ENCODE measurements at regions of chr4 and their contacts with region 1.

Region 1: GRCh38 chr4:55409468-55410171 is 13.9 kb downstream of the TMEM165 start:
- DNase-seq: peak in 1 of 2 experiments; percentile 34
- H3K4me3 ChIP-seq: no peak overlapping the region
- H3K4me3 Mint-ChIP-seq: no peak overlapping the region
- H3K27ac Mint-ChIP-seq: no peak overlapping the region
- H3K4me1 ChIP-seq: peaks cover 23% of the 10 kb centered on the region
- H3K4me1 Mint-ChIP-seq: peaks cover 32% of the 10 kb centered on the region
- H3K27me3 ChIP-seq: no peaks in the 10 kb centered on the region
- H3K27me3 Mint-ChIP-seq: no peaks in the 10 kb centered on the region
- CTCF ChIP-seq: peak in 1 of 2 experiments; percentile 42

Region 2: GRCh38 chr4:55303818-55304217 is 105.8 kb before region 1 on chr4:
- CTCF ChIA-PET with region 1: no interaction called
- POLR2A ChIA-PET with region 1: no interaction called
- intact Hi-C with region 1: no loop called
- DNase-seq: no peak
- H3K4me3 ChIP-seq: no peak overlapping the region
- H3K4me3 Mint-ChIP-seq: no peak overlapping the region
- H3K27ac Mint-ChIP-seq: no peak overlapping the region
- H3K4me1 ChIP-seq: no peaks in the 10 kb centered on the region
- H3K4me1 Mint-ChIP-seq: no peaks in the 10 kb centered on the region
- H3K27me3 ChIP-seq: no peaks in the 10 kb centered on the region
- H3K27me3 Mint-ChIP-seq: peaks cover 3% of the 10 kb centered on the region
- CTCF ChIP-seq: no peak

Region 3: GRCh38 chr4:55345980-55346850 is 63.4 kb before region 1 on chr4 and contains the start of gene SRD5A3:
- CTCF ChIA-PET with region 1: no interaction called
- POLR2A ChIA-PET with region 1: no interaction called
- intact Hi-C with region 1: loop called (anchors 2 kb)
- DNase-seq: peak; percentile 82 to 95
- H3K4me3 ChIP-seq: peak within 1 kb of the TSS; percentile 55
- H3K4me3 Mint-ChIP-seq: peak within 1 kb of the TSS; percentile 84
- H3K27ac Mint-ChIP-seq: peak within 1 kb of the TSS; percentile 93
- H3K4me1 ChIP-seq: peaks cover 9% of the 10 kb centered on the region; the same call in 1 of the 2 replicates
- H3K4me1 Mint-ChIP-seq: peaks cover 22% of the 10 kb centered on the region
- H3K27me3 ChIP-seq: no peaks in the 10 kb centered on the region
- H3K27me3 Mint-ChIP-seq: no peaks in the 10 kb centered on the region
- CTCF ChIP-seq: peak; percentile 71 to 84
- total RNA-seq, gene SRD5A3: 22.6 and 26.9 TPM in 2 replicates

Region 4: GRCh38 chr4:55395529-55396307 is 13.9 kb before region 1 on chr4 and contains the start of gene TMEM165:
- CTCF ChIA-PET with region 1: no interaction called
- POLR2A ChIA-PET with region 1: no interaction called
- intact Hi-C with region 1: loop called (anchors 1 kb)
- DNase-seq: peak; percentile 91 to 95
- H3K4me3 ChIP-seq: peak within 1 kb of the TSS; percentile 89
- H3K4me3 Mint-ChIP-seq: peak within 1 kb of the TSS; percentile 91
- H3K27ac Mint-ChIP-seq: peak within 1 kb of the TSS; percentile 94
- H3K4me1 ChIP-seq: peaks cover 8% of the 10 kb centered on the region; the same call in 1 of the 2 replicates
- H3K4me1 Mint-ChIP-seq: peaks cover 24% of the 10 kb centered on the region
- H3K27me3 ChIP-seq: no peaks in the 10 kb centered on the region
- H3K27me3 Mint-ChIP-seq: no peaks in the 10 kb centered on the region
- CTCF ChIP-seq: no peak
- total RNA-seq, gene TMEM165: 90.4 and 91.9 TPM in 2 replicates

Region 5: DNA sequence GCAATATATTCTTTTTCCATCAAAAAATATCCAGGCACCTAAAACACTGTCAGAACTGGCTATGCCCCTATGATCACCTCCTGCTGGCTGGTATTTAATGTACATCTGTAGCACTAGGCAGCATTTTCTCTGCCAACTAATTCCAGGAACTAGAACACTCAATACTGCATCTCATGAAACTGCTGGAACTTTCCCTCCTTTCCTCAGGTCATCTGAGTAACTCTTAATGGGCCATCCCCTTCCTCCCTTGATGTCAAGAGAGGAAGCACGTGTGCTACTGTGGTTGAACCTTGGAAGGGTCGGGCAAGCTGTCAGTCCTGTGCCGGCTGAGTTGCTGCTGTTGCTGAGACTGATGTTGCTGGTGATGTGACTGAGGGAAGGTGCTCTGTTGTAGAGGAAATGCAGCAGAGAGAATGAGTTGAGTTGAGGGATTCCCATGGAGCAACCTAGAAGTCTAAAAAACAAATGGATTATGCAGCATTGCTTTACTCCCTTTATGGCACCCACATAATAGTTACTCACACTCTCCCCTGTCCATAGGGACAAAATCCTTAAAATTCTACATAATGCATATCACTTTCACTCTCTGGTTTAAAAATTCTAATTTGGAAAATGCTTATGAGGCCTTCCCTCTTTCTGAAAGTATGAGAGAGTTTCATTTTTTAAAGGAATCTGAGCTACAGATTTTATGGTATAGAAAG is 25.7 kb after region 1 on chr4:
- CTCF ChIA-PET with region 1: interaction called, 3 read pairs
- POLR2A ChIA-PET with region 1: no interaction called
- intact Hi-C with region 1: loop called (anchors 2 kb)
- DNase-seq: no peak
- H3K4me3 ChIP-seq: no peak overlapping the region
- H3K4me3 Mint-ChIP-seq: no peak overlapping the region
- H3K27ac Mint-ChIP-seq: no peak overlapping the region
- H3K4me1 ChIP-seq: peaks cover 48% of the 10 kb centered on the region
- H3K4me1 Mint-ChIP-seq: peaks cover 22% of the 10 kb centered on the region
- H3K27me3 ChIP-seq: no peaks in the 10 kb centered on the region
- H3K27me3 Mint-ChIP-seq: no peaks in the 10 kb centered on the region
- CTCF ChIP-seq: no peak

Region 6: GRCh38 chr4:55491486-55491885 is 81.9 kb after region 1 on chr4:
- CTCF ChIA-PET with region 1: no interaction called
- POLR2A ChIA-PET with region 1: no interaction called
- intact Hi-C with region 1: no loop called
- DNase-seq: no peak
- H3K4me3 ChIP-seq: no peak overlapping the region
- H3K4me3 Mint-ChIP-seq: no peak overlapping the region
- H3K27ac Mint-ChIP-seq: no peak overlapping the region
- H3K4me1 ChIP-seq: no peaks in the 10 kb centered on the region
- H3K4me1 Mint-ChIP-seq: no peaks in the 10 kb centered on the region
- H3K27me3 ChIP-seq: no peaks in the 10 kb centered on the region
- H3K27me3 Mint-ChIP-seq: no peaks in the 10 kb centered on the region
- CTCF ChIP-seq: no peak

Region 7: DNA sequence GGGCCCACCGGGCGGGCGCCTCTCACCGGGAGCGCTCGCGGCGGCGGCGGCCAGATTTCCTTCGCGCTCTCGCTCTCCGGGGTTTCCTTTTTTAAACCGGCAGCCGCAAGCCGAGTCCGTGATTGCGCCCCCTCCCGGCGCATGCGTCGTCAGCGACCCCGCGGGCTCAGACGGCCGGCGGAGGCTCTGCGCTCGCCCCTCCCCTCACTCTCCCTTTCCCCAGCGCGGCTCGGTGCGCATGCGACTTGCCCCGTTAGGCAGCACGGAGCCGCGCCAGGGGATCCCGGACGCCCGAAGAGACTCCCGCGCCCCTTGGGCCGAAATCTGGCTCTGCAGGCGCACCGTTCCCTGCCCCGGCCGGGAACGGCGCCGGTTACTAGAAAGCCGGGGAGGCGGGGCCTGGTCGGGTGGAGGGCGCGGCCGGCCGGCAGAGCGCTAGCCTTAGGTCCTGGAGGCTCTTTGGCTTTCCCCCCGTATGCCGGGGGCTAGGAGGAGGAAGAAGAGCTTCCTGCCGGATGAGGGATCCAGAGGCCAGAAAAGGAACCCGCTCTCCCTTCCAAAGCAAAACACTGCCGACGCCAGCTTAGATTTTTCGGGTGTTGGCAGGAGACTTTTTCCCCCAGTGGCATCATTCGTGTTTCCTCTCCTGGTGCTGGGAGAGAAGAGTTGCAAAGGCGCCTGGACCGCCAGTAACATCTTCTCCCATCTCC is 137.3 kb after region 1 on chr4 and contains the start of gene CLOCK:
- CTCF ChIA-PET with region 1: no interaction called
- POLR2A ChIA-PET with region 1: no interaction called
- intact Hi-C with region 1: loop called (anchors 2 kb)
- DNase-seq: peak; percentile 87 to 91
- H3K4me3 ChIP-seq: peak within 1 kb of the TSS; percentile 82
- H3K4me3 Mint-ChIP-seq: peak within 1 kb of the TSS; percentile 83
- H3K27ac Mint-ChIP-seq: peak within 1 kb of the TSS; percentile 63
- H3K4me1 ChIP-seq: peaks cover 19% of the 10 kb centered on the region
- H3K4me1 Mint-ChIP-seq: peaks cover 23% of the 10 kb centered on the region
- H3K27me3 ChIP-seq: no peaks in the 10 kb centered on the region
- H3K27me3 Mint-ChIP-seq: no peaks in the 10 kb centered on the region
- CTCF ChIP-seq: peak; percentile 47 to 50
- total RNA-seq, gene CLOCK: 9.5 and 12.0 TPM in 2 replicates

Region 8: DNA sequence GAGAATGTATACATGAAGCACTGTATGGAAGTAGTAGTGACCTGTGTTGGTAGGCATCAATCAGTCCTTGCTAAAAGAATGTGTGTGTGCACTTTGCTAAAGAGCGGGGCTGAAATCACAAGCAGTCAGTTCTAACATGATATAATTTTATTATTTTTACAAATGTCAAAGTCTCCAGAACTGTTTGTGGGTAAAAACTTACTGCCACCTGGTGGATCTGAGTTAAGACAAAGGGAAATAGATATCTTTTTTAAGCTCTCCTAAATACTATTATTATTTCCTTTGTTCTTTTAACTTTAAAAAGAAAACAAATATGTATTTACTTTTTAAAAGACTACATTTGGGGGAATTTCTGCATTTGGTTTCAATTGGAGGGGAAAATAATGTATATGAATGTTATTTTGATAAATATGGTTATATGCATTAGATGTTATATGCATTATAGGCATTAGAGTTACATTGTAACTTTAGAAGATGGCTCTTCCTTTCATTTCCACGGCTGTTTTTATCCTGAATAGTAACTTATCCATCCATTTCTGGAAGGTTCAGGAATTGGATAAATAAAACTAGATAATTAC is 144.9 kb after region 1 on chr4:
- CTCF ChIA-PET with region 1: no interaction called
- POLR2A ChIA-PET with region 1: no interaction called
- intact Hi-C with region 1: loop called (anchors 2 kb)
- DNase-seq: no peak
- H3K4me3 ChIP-seq: no peak overlapping the region
- H3K4me3 Mint-ChIP-seq: no peak overlapping the region
- H3K27ac Mint-ChIP-seq: no peak overlapping the region
- H3K4me1 ChIP-seq: 0 out of 2 replicates have a peak, but pooled peaks cover 5% of the 10 kb centered on the region
- H3K4me1 Mint-ChIP-seq: peaks cover 6% of the 10 kb centered on the region
- H3K27me3 ChIP-seq: no peaks in the 10 kb centered on the region
- H3K27me3 Mint-ChIP-seq: no peaks in the 10 kb centered on the region
- CTCF ChIP-seq: peak in 1 of 2 experiments; percentile 31

Region 9: GRCh38 chr4:55736605-55737183 is 327.1 kb after region 1 on chr4:
- CTCF ChIA-PET with region 1: no interaction called
- POLR2A ChIA-PET with region 1: no interaction called
- intact Hi-C with region 1: loop called (anchors 1 kb)
- DNase-seq: no peak
- H3K4me3 ChIP-seq: no peak overlapping the region
- H3K4me3 Mint-ChIP-seq: no peak overlapping the region
- H3K27ac Mint-ChIP-seq: no peak overlapping the region
- H3K4me1 ChIP-seq: no peaks in the 10 kb centered on the region
- H3K4me1 Mint-ChIP-seq: no peaks in the 10 kb centered on the region
- H3K27me3 ChIP-seq: no peaks in the 10 kb centered on the region
- H3K27me3 Mint-ChIP-seq: peaks cover 21% of the 10 kb centered on the region
- CTCF ChIP-seq: peak; percentile 10 to 19